ENCODE measurements at regions of chr2 and their contacts with region 1.

Region 1: DNA sequence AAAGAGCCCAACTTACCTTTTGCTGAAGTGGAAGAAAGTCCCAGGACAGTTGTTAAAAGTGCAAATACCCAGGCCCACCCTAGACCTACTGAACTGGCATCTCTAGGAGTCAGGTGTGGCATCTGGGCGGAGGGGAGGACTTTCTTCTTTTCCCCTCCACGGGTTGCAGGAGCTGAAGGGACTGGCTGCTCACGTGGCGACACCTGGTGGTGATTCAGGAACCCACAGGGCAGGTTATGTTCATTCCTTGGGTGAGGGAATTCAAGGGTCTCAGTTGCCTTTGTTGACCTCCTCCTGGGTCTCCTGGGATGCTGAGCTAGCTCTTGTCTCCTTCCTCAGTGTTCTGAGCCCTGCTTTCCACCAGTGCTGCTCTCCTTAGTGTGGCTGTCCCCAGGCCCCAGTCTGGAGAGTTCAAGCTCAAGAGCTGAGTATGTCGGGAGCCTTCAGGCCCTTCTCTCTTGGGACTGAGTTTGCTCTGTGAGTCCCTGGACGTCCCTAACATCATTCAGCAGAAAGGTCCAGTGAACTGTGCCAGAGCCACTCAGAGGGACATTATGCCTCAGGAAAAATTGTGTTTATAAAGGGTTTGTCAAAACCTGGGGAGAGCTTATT is 56.9 kb downstream of the DYSF start:
- DNase-seq: peak; percentile 64 to 91
- ATAC-seq: peak; percentile 73 to 91; a peak in 5 of 6 replicates
- H3K4me3 ChIP-seq: no peak overlapping the region
- H3K27ac ChIP-seq: no peak overlapping the region
- H3K4me1 ChIP-seq: no peaks in the 10 kb centered on the region
- CTCF ChIP-seq: peak; percentile 98
- EP300 ChIP-seq: no peak
- POLR2A ChIP-seq: no peak
- RAD21 ChIP-seq: peak; percentile 94 to 95

Region 2: DNA sequence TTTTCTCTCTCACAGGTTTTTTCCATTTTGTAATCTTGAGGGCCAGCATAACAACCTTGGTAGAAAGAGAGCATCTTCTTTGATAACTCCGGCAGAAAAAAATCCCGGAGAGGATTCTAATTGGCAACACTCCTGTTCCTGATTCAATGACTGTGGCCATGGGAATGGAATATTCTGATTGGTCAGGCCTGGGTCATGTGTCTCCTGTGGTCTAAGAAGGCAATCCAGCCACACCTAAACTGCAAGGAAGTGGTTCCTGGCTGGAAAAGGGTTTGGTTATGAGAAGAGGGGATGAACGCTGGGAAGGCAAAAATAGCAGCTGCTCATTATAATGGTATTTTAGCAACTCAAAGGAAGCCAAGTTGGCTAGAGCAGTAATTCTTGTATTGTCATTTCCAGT is 203.5 kb before region 1 on chr2:
- CTCF ChIA-PET with region 1: interaction called, 234 read pairs
- POLR2A ChIA-PET with region 1: no interaction called
- DNase-seq: no peak
- ATAC-seq: no peak
- H3K4me3 ChIP-seq: no peak overlapping the region
- H3K27ac ChIP-seq: no peak overlapping the region
- H3K4me1 ChIP-seq: no peaks in the 10 kb centered on the region
- CTCF ChIP-seq: no peak
- EP300 ChIP-seq: no peak
- POLR2A ChIP-seq: no peak
- RAD21 ChIP-seq: no peak

Region 3: GRCh38 chr2:71447280-71447679 is 63.0 kb before region 1 on chr2:
- CTCF ChIA-PET with region 1: interaction called, 28 read pairs
- POLR2A ChIA-PET with region 1: no interaction called
- DNase-seq: no peak
- ATAC-seq: no peak
- H3K4me3 ChIP-seq: no peak overlapping the region
- H3K27ac ChIP-seq: no peak overlapping the region
- H3K4me1 ChIP-seq: peaks cover under 1% of the 10 kb centered on the region; the same call in 1 of the 3 replicates
- CTCF ChIP-seq: no peak
- EP300 ChIP-seq: no peak
- POLR2A ChIP-seq: no peak
- RAD21 ChIP-seq: no peak

Region 4: GRCh38 chr2:71477231-71477691 is 33.0 kb before region 1 on chr2:
- CTCF ChIA-PET with region 1: interaction called, 17 read pairs
- POLR2A ChIA-PET with region 1: no interaction called
- DNase-seq: no peak
- ATAC-seq: no peak
- H3K4me3 ChIP-seq: no peak overlapping the region
- H3K27ac ChIP-seq: no peak overlapping the region
- H3K4me1 ChIP-seq: no peaks in the 10 kb centered on the region
- CTCF ChIP-seq: no peak
- EP300 ChIP-seq: no peak
- POLR2A ChIP-seq: no peak
- RAD21 ChIP-seq: no peak

Region 5: GRCh38 chr2:71524476-71524875 is 14.2 kb after region 1 on chr2:
- CTCF ChIA-PET with region 1: interaction called, 25 read pairs
- POLR2A ChIA-PET with region 1: no interaction called
- DNase-seq: no peak
- ATAC-seq: no peak
- H3K4me3 ChIP-seq: no peak overlapping the region
- H3K27ac ChIP-seq: no peak overlapping the region
- H3K4me1 ChIP-seq: no peaks in the 10 kb centered on the region
- CTCF ChIP-seq: no peak
- EP300 ChIP-seq: no peak
- POLR2A ChIP-seq: no peak
- RAD21 ChIP-seq: no peak